ENCODE measurements at regions of chr1 and their contacts with region 1.

Region 1: GRCh38 chr1:33055210-33056008 is 18.7 kb upstream of the AK2 start:
- DNase-seq: peak; percentile 85
- H3K4me3 ChIP-seq: no peak overlapping the region
- H3K27ac ChIP-seq: peak overlapping the region in 1 of 2 experiments; percentile 56; a peak in 1 of 4 replicates
- H3K4me1 ChIP-seq: peaks cover 3 to 10% of the 10 kb centered on the region in 2 experiments; a peak in 2 of 4 replicates
- H3K27me3 ChIP-seq: no peaks in the 10 kb centered on the region
- CTCF ChIP-seq: peak; percentile 75
- EP300 ChIP-seq: no peak
- RAD21 ChIP-seq: peak; percentile 81

Region 2: GRCh38 chr1:32919811-32920733 is 135.3 kb before region 1 on chr1:
- CTCF ChIA-PET with region 1: interaction called, 12 read pairs
- POLR2A ChIA-PET with region 1: no interaction called
- DNase-seq: no peak
- H3K4me3 ChIP-seq: no peak overlapping the region
- H3K27ac ChIP-seq: 0 out of 4 replicates have a peak overlapping the region, but pooled peaks of 1 of the 2 experiments have one; percentile 31
- H3K4me1 ChIP-seq: peaks cover 0 to 11% of the 10 kb centered on the region in 2 experiments; a peak in 1 of 4 replicates
- H3K27me3 ChIP-seq: no peaks in the 10 kb centered on the region
- CTCF ChIP-seq: no peak
- EP300 ChIP-seq: no peak
- RAD21 ChIP-seq: no peak

Region 3: GRCh38 chr1:33080885-33081553 is 25.6 kb after region 1 on chr1 and contains the start of gene AZIN2:
- CTCF ChIA-PET with region 1: interaction called, 86 read pairs
- POLR2A ChIA-PET with region 1: no interaction called
- DNase-seq: peak; percentile 98
- H3K4me3 ChIP-seq: peak within 1 kb of the TSS; percentile 73 to 75
- H3K27ac ChIP-seq: peak within 1 kb of the TSS in 1 of 2 experiments; percentile 60; a peak in 2 of 4 replicates
- H3K4me1 ChIP-seq: peaks cover 9 to 13% of the 10 kb centered on the region in 2 experiments; a peak in 2 of 4 replicates
- H3K27me3 ChIP-seq: no peaks in the 10 kb centered on the region
- CTCF ChIP-seq: no peak
- EP300 ChIP-seq: no peak
- RAD21 ChIP-seq: no peak
- polyA plus RNA-seq, gene AZIN2: 17.8 and 20.6 TPM in 2 replicates

Measured in SK-N-SH (cell line).